ENCODE measurements at regions of chr10 and their contacts with region 1.

Region 1: GRCh38 chr10:32346134-32346550 is 816 bp downstream of the EPC1 start:
- DNase-seq: peak; percentile 98
- ATAC-seq: peak; percentile 88
- H3K4me3 Mint-ChIP-seq: peak overlapping the region; percentile 84
- H3K27ac Mint-ChIP-seq: peak overlapping the region; percentile 99
- H3K4me1 Mint-ChIP-seq: peaks cover 71% of the 10 kb centered on the region
- H3K27me3 Mint-ChIP-seq: no peaks in the 10 kb centered on the region

Region 2: GRCh38 chr10:30935078-30935477 is 1411.1 kb before region 1 on chr10:
- CTCF ChIA-PET with region 1: no interaction called
- POLR2A ChIA-PET with region 1: no interaction called
- intact Hi-C with region 1: no loop called
- DNase-seq: no peak
- ATAC-seq: no peak
- H3K4me3 Mint-ChIP-seq: no peak overlapping the region
- H3K27ac Mint-ChIP-seq: no peak overlapping the region
- H3K4me1 Mint-ChIP-seq: peaks cover 11% of the 10 kb centered on the region
- H3K27me3 Mint-ChIP-seq: no peaks in the 10 kb centered on the region

Region 3: GRCh38 chr10:32055813-32056600 is 290.1 kb before region 1 on chr10 and contains the start of gene KIF5B:
- CTCF ChIA-PET with region 1: no interaction called
- POLR2A ChIA-PET with region 1: no interaction called
- intact Hi-C with region 1: loop called in 1 of 2 experiments (anchors 2 kb)
- DNase-seq: peak; percentile 92
- ATAC-seq: peak; percentile 92
- H3K4me3 Mint-ChIP-seq: peak within 1 kb of the TSS; percentile 97
- H3K27ac Mint-ChIP-seq: peak within 1 kb of the TSS; percentile 96
- H3K4me1 Mint-ChIP-seq: peaks cover 37% of the 10 kb centered on the region
- H3K27me3 Mint-ChIP-seq: no peaks in the 10 kb centered on the region
- total RNA-seq, gene KIF5B: 57.4 to 59.9 TPM

Region 4: DNA sequence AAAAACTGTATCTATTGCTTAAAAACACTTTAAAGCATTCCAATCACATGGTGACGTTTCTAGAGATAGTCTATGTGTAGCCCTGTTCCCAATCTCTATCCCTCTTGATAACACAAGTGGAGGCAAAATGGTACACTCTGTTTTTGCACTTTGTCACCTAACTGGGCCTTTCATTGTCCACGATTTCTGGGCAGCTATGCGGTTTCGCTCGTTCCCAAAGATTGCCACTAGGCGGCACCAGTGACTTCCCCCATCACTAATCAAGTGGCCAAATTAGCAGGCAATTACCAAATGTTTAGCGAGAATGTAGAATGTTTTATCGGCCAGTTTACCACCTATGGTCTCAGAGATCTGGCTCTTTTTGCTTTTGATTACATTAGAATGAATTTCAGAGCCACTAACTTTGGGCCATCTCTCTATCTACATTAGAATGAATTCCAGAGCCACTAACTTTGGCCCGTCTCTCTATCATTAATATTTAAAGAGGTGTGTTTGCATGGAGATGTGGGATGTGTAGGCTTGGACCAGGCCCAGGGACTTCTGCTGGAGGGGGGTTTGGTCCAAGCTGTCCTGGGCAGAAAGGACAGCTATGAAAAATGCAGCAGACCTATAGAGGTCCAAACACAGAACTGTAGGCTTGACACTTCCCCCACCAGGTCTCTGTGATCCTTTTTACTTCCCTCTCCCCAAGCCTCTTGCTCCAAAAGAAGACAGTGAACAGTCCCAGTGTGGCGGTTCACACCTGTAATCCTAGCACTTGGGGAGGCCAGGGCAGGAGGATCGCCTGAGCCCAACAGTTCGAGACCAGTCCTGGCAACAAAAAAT is 89.3 kb before region 1 on chr10:
- CTCF ChIA-PET with region 1: interaction called, 18 read pairs
- POLR2A ChIA-PET with region 1: no interaction called
- intact Hi-C with region 1: loop called (anchors 1 kb)
- DNase-seq: peak; percentile 80
- ATAC-seq: peak; percentile 74
- H3K4me3 Mint-ChIP-seq: no peak overlapping the region
- H3K27ac Mint-ChIP-seq: no peak overlapping the region
- H3K4me1 Mint-ChIP-seq: peaks cover 9% of the 10 kb centered on the region
- H3K27me3 Mint-ChIP-seq: no peaks in the 10 kb centered on the region

Region 5: DNA sequence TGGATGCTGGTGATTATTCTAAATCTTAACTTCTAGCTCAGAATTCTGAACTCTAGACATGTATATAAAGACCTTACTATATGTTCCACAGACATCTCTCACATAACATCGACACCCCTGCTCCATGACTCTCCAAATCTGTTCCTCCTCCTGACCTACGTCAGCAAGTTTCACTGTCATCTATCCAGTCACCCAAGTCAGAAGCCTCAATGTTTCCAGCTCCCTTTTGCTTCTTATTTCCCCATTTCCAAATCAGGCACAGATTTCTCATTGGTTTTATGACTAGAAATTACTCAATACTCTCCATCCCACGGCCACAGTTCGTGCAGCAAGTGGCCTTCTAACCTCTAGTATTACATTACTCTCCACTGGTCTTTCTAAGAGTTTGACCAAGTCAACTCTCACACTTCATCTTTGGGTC is 27.7 kb before region 1 on chr10:
- CTCF ChIA-PET with region 1: interaction called, 5 read pairs
- POLR2A ChIA-PET with region 1: interaction called, 3 read pairs
- intact Hi-C with region 1: loop called (anchors 1 kb)
- DNase-seq: peak; percentile 38
- ATAC-seq: peak; percentile 71
- H3K4me3 Mint-ChIP-seq: peak overlapping the region; percentile 1
- H3K27ac Mint-ChIP-seq: peak overlapping the region; percentile 69
- H3K4me1 Mint-ChIP-seq: peaks cover 87% of the 10 kb centered on the region
- H3K27me3 Mint-ChIP-seq: no peaks in the 10 kb centered on the region

Region 6: GRCh38 chr10:32367793-32368453 is 21.8 kb after region 1 on chr10:
- CTCF ChIA-PET with region 1: interaction called, 7 read pairs
- POLR2A ChIA-PET with region 1: interaction called, 3 read pairs
- intact Hi-C with region 1: loop called (anchors 1 to 2 kb)
- DNase-seq: peak; percentile 86
- ATAC-seq: peak; percentile 20
- H3K4me3 Mint-ChIP-seq: peak overlapping the region; percentile 0
- H3K27ac Mint-ChIP-seq: peak overlapping the region; percentile 5
- H3K4me1 Mint-ChIP-seq: peaks cover 62% of the 10 kb centered on the region
- H3K27me3 Mint-ChIP-seq: no peaks in the 10 kb centered on the region

Region 7: GRCh38 chr10:32958085-32959005 is 612.2 kb after region 1 on chr10 and contains the start of gene ITGB1:
- CTCF ChIA-PET with region 1: no interaction called
- POLR2A ChIA-PET with region 1: no interaction called
- intact Hi-C with region 1: loop called in 1 of 2 experiments (anchors 1 kb)
- DNase-seq: peak; percentile 92
- ATAC-seq: peak; percentile 83
- H3K4me3 Mint-ChIP-seq: peak within 1 kb of the TSS; percentile 83
- H3K27ac Mint-ChIP-seq: peak within 1 kb of the TSS; percentile 96
- H3K4me1 Mint-ChIP-seq: peaks cover 43% of the 10 kb centered on the region
- H3K27me3 Mint-ChIP-seq: peaks cover 10% of the 10 kb centered on the region
- total RNA-seq, gene ITGB1: 57.6 to 68.9 TPM